HEK293 (cell line): ENCODE measurements at regions of chr6 and their contacts with region 1.

Region 1: DNA sequence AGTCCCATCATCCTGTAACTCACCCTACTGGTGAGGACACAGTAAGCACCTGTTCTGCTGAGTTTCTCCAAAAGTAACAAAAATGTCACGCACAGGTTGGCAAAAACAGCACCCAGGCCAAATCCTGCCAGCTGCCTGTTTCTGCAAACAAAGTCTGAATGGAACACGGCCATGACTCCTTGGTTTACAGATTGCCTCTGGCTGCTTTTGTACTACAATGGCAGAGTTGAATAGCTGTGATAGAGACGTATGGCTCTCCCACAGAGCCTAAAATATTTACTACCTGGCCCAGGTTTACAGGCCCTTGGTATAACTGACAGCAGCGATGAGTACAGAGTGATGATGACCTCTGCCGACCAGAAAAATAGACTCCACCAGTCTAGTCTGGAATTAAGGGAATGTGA is 52.6 kb downstream of the CNKSR3 start:
- H3K4me3 ChIP-seq: no peak overlapping the region
- H3K27ac ChIP-seq: no peak overlapping the region
- H3K4me1 ChIP-seq: peaks cover 16% of the 10 kb centered on the region
- CTCF ChIP-seq: no peak

Region 2: GRCh38 chr6:154570505-154570904 is 112.6 kb after region 1 on chr6:
- CTCF ChIA-PET with region 1: interaction called, 11 read pairs
- POLR2A ChIA-PET with region 1: no interaction called
- H3K4me3 ChIP-seq: no peak overlapping the region
- H3K27ac ChIP-seq: no peak overlapping the region
- H3K4me1 ChIP-seq: peaks cover 6% of the 10 kb centered on the region; the same call in 1 of the 2 replicates
- CTCF ChIP-seq: no peak